ENCODE measurements at regions of chr15 and their contacts with region 1.

Region 1: DNA sequence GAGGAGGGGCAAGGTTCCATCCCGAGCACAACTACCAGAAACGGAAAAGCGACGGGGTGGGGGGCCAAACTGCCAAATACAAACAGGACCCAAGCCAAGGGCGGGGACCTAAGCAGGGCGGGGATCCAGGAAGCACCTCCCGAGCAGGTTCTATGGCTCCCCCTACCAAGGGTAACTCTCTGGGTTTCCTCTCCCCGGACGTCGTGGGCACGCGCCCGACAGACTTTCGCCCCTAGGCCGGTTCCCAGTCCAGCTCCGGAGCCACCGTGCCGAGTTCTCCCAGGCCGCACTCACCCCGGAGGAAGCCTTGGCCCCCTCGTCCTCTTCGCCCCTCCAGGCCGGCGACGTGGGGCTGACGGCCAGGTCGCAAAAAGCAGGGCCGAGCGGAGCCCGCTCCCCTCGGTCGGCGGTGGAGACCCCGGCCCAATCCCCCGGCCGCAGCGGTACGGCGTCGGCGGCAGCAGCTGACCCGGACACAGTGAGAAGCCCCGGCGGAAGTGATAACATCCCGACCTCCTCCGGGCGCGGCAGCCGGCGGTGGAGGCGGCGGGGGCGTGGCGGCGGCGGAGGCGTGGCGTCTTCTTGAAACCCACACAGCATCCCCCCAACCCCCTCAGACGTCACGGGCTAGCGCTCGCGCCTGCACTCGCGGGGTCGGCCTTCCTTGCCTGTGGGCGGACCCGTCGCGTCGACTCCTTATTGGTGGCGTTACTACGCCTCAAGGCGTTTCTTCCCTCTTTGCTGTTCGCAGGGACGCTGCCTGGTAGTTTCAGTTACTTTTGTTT is at the start of gene BNIP2:
- DNase-seq: peak; percentile 97
- ATAC-seq: peak; percentile 87
- H3K4me3 Mint-ChIP-seq: peak within 1 kb of the TSS; percentile 92
- H3K27ac Mint-ChIP-seq: peak within 1 kb of the TSS; percentile 96
- H3K4me1 Mint-ChIP-seq: peaks cover 52% of the 10 kb centered on the region
- H3K27me3 Mint-ChIP-seq: no peaks in the 10 kb centered on the region
- CTCF ChIP-seq: no peak
- total RNA-seq, gene BNIP2: 80.1 and 82.9 TPM in 2 replicates

Region 2: GRCh38 chr15:58749532-58750337 is 939.3 kb before region 1 on chr15 and contains the start of gene ADAM10:
- CTCF ChIA-PET with region 1: no interaction called
- POLR2A ChIA-PET with region 1: no interaction called
- intact Hi-C with region 1: loop called (anchors 2 kb)
- DNase-seq: peak; percentile 95
- ATAC-seq: peak; percentile 92
- H3K4me3 Mint-ChIP-seq: peak within 1 kb of the TSS; percentile 96
- H3K27ac Mint-ChIP-seq: peak within 1 kb of the TSS; percentile 97
- H3K4me1 Mint-ChIP-seq: peaks cover 44% of the 10 kb centered on the region
- H3K27me3 Mint-ChIP-seq: no peaks in the 10 kb centered on the region
- CTCF ChIP-seq: no peak
- total RNA-seq, gene ADAM10: 87.7 and 91.6 TPM in 2 replicates

Region 3: DNA sequence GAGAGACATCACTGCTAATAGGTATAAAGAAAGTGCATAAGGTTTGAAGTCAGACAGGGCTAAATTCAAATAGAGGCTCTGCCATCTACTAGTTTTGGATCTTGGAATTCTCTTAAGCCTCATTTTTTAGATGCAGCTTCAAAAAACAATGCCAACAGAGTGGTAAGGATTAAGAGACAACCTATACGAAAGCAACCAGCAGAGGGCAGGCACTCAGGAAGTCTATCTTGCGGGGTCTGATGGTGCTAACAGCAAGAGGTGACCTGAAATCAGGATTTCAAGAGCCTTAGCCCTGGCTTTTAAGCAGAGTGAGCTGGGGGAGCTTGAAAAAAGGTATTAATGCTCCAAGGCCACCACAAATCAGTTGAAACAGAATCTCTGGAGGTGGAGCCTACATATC is 441.7 kb before region 1 on chr15:
- CTCF ChIA-PET with region 1: no interaction called
- POLR2A ChIA-PET with region 1: no interaction called
- intact Hi-C with region 1: loop called (anchors 10 kb)
- DNase-seq: no peak
- ATAC-seq: peak; percentile 52
- H3K4me3 Mint-ChIP-seq: no peak overlapping the region
- H3K27ac Mint-ChIP-seq: peak overlapping the region; percentile 24
- H3K4me1 Mint-ChIP-seq: peaks cover 71% of the 10 kb centered on the region
- H3K27me3 Mint-ChIP-seq: no peaks in the 10 kb centered on the region
- CTCF ChIP-seq: no peak

Region 4: GRCh38 chr15:59399465-59400102 is 289.4 kb before region 1 on chr15:
- CTCF ChIA-PET with region 1: no interaction called
- POLR2A ChIA-PET with region 1: no interaction called
- intact Hi-C with region 1: no loop called
- DNase-seq: peak; percentile 46
- ATAC-seq: peak; percentile 92
- H3K4me3 Mint-ChIP-seq: peak overlapping the region; percentile 78
- H3K27ac Mint-ChIP-seq: peak overlapping the region; percentile 93
- H3K4me1 Mint-ChIP-seq: peaks cover 78% of the 10 kb centered on the region
- H3K27me3 Mint-ChIP-seq: no peaks in the 10 kb centered on the region
- CTCF ChIP-seq: no peak

Region 5: GRCh38 chr15:59473226-59473625 is 215.8 kb before region 1 on chr15:
- CTCF ChIA-PET with region 1: no interaction called
- POLR2A ChIA-PET with region 1: no interaction called
- intact Hi-C with region 1: no loop called
- DNase-seq: no peak
- ATAC-seq: no peak
- H3K4me3 Mint-ChIP-seq: no peak overlapping the region
- H3K27ac Mint-ChIP-seq: no peak overlapping the region
- H3K4me1 Mint-ChIP-seq: peaks cover 9% of the 10 kb centered on the region
- H3K27me3 Mint-ChIP-seq: no peaks in the 10 kb centered on the region
- CTCF ChIP-seq: no peak

Region 6: GRCh38 chr15:59656897-59657634 is 32.0 kb before region 1 on chr15 and contains the start of gene GTF2A2:
- CTCF ChIA-PET with region 1: interaction called, 4 read pairs
- POLR2A ChIA-PET with region 1: interaction called, 25 read pairs
- intact Hi-C with region 1: loop called (anchors 1 kb)
- DNase-seq: peak; percentile 91
- ATAC-seq: peak; percentile 100
- H3K4me3 Mint-ChIP-seq: no peak within 1 kb of the TSS
- H3K27ac Mint-ChIP-seq: peak within 1 kb of the TSS; percentile 82
- H3K4me1 Mint-ChIP-seq: peaks cover 14% of the 10 kb centered on the region
- H3K27me3 Mint-ChIP-seq: no peaks in the 10 kb centered on the region
- CTCF ChIP-seq: no peak
- total RNA-seq, gene GTF2A2: 77.4 and 95.2 TPM in 2 replicates

Region 7: DNA sequence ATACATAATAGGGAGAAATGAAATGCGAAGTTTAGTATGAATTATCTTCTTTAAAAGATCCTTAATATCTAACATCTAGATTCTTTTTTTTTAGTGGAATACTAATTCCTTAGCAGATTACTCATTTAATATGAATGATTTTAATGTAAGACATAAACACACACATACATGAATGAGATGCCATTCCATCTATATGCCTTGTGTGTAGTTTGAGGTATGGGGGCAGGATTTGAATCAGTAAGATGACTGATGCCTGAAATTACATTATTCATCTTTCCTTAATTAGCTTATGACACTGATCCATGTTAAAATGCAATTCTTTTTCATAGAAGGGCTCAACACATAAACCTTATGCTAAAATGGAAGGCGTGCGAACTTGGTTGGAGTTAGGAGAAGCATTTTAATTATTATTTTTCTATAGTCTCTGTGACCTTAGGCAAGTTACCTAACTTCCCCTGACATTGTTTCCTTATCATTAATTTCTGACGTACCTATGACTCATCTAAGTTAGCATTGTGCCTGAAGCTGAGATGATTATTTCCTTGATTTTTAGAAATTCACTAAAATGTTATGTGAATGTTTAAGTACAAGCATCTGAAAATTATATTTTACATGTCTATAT is 10.9 kb after region 1 on chr15:
- CTCF ChIA-PET with region 1: no interaction called
- POLR2A ChIA-PET with region 1: no interaction called
- intact Hi-C with region 1: no loop called
- DNase-seq: no peak
- ATAC-seq: no peak
- H3K4me3 Mint-ChIP-seq: no peak overlapping the region
- H3K27ac Mint-ChIP-seq: no peak overlapping the region
- H3K4me1 Mint-ChIP-seq: no peaks in the 10 kb centered on the region
- H3K27me3 Mint-ChIP-seq: no peaks in the 10 kb centered on the region
- CTCF ChIP-seq: no peak

Region 8: DNA sequence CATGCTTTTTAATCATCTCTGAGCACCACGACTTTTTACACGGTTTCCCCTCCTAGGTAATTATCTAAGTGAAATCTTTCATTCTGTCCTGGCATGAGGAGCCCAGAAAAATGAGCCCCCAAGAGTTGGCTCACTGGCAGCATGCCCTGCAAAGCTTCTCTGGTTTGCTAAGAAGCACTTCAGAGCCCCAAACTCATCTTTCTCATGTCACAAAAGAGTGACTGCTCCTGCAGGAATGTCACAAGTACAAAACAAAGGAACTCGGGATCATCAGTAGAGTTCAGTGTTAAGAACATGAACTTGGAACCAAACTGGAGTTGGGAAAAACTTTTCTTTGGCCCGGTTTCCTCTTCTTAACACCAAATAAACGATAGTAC is 439.0 kb after region 1 on chr15:
- CTCF ChIA-PET with region 1: no interaction called
- POLR2A ChIA-PET with region 1: interaction called, 4 read pairs
- intact Hi-C with region 1: loop called (anchors 2 kb)
- DNase-seq: no peak
- ATAC-seq: no peak
- H3K4me3 Mint-ChIP-seq: peak overlapping the region; percentile 89
- H3K27ac Mint-ChIP-seq: peak overlapping the region; percentile 85
- H3K4me1 Mint-ChIP-seq: peaks cover 21% of the 10 kb centered on the region
- H3K27me3 Mint-ChIP-seq: peaks cover 3% of the 10 kb centered on the region
- CTCF ChIP-seq: no peak

Region 9: GRCh38 chr15:60478566-60479360 is 789.7 kb after region 1 on chr15 and contains the start of gene ICE2:
- CTCF ChIA-PET with region 1: no interaction called
- POLR2A ChIA-PET with region 1: interaction called, 5 read pairs
- intact Hi-C with region 1: loop called (anchors 1 kb)
- DNase-seq: peak; percentile 91
- ATAC-seq: peak; percentile 93
- H3K4me3 Mint-ChIP-seq: peak within 1 kb of the TSS; percentile 99
- H3K27ac Mint-ChIP-seq: peak within 1 kb of the TSS; percentile 98
- H3K4me1 Mint-ChIP-seq: peaks cover 52% of the 10 kb centered on the region
- H3K27me3 Mint-ChIP-seq: no peaks in the 10 kb centered on the region
- CTCF ChIP-seq: no peak
- total RNA-seq, gene ICE2: 55.5 and 78.0 TPM in 2 replicates

Measured in activated B cell treated with CpG ODN at 0.5 μM for 24 hours (primary cell).